Thyroid gland (tissue), 4 donors: ENCODE measurements at regions of chr6 and their contacts with region 1.

Region 1: GRCh38 chr6:35449287-35449881 is 2.8 kb upstream of the FANCE start:
- DNase-seq: peak; percentile 19 to 35
- H3K4me3 ChIP-seq: no peak overlapping the region
- H3K27ac ChIP-seq: no peak overlapping the region
- H3K4me1 ChIP-seq: peaks cover 11 to 18% of the 10 kb centered on the region in 2 donors
- H3K27me3 ChIP-seq: no peaks in the 10 kb centered on the region
- CTCF ChIP-seq: peak; percentile 45 to 88 (median 72)
- POLR2A ChIP-seq: no peak

Region 2: GRCh38 chr6:35297601-35298481 is 151.5 kb before region 1 on chr6 and contains the start of gene DEF6:
- intact Hi-C with region 1: loop called (anchors 5 kb)
- DNase-seq: peak; percentile 87 to 89
- H3K4me3 ChIP-seq: peak within 1 kb of the TSS in 1 of 3 donors; percentile 14
- H3K27ac ChIP-seq: peak within 1 kb of the TSS in 2 of 3 donors; percentile 16 to 30
- H3K4me1 ChIP-seq: peaks cover 4 to 16% of the 10 kb centered on the region in 2 donors
- H3K27me3 ChIP-seq: no peaks in the 10 kb centered on the region
- CTCF ChIP-seq: peak; percentile 22 to 95 (median 76)
- POLR2A ChIP-seq: no peak
- total RNA-seq, gene DEF6: 5.2 to 9.3 (median 6.0) TPM

Region 3: DNA sequence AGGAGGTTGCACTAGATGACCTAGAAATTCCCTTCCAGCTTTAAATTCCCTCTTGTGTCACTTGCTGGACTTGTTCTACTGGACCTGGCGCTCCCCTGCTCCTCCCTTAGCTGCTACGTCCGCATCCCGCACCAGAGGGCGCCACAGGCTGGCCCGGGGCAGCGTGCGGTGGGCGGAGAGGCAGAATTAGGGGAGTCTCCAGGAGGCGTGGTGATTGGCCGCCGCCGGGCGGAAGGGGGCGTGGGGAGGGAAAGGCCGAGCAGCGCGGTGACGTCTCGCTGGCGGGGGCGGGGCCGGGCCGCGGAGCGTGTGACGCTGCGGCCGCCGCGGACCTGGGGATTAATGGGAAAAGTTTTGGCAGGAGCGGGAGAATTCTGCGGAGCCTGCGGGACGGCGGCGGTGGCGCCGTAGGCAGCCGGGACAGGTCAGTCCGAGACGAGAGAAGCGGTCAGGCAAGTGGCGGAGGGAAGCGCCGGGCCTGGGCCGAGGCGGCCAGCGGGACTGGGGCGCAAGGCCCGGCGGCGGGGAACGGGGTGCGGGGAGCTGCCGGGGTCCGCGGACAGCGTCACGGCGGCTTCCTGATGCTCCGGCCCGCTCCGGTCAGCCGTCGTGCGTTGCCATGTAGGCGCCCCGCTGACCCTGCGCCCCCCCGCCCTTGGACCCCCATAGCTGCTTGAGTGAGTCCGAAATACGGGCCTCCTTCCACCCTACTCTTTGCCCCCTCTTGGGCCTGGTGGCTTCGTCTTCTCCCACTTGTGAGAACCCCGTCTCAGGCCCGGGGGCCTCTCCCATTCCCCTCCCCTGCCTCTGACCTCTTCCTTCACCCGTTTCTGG is 106.9 kb before region 1 on chr6 and contains the start of gene PPARD:
- intact Hi-C with region 1: loop called (anchors 2 kb)
- DNase-seq: peak; percentile 98 to 99
- H3K4me3 ChIP-seq: peak within 1 kb of the TSS; percentile 78 to 95 (median 87)
- H3K27ac ChIP-seq: peak within 1 kb of the TSS; percentile 92 to 96 (median 95)
- H3K4me1 ChIP-seq: peaks cover 35 to 41% of the 10 kb centered on the region in 2 donors
- H3K27me3 ChIP-seq: no peaks in the 10 kb centered on the region
- CTCF ChIP-seq: peak; percentile 94 to 100 (median 98)
- POLR2A ChIP-seq: peak; percentile 52 to 97
- total RNA-seq, gene PPARD: 17.3 to 40.3 (median 35.9) TPM

Region 4: GRCh38 chr6:35392111-35392702 is 57.2 kb before region 1 on chr6:
- intact Hi-C with region 1: no loop called
- DNase-seq: peak; percentile 99
- H3K4me3 ChIP-seq: no peak overlapping the region
- H3K27ac ChIP-seq: peak overlapping the region; percentile 82 to 91 (median 84)
- H3K4me1 ChIP-seq: peaks cover 42 to 56% of the 10 kb centered on the region in 2 donors
- H3K27me3 ChIP-seq: no peaks in the 10 kb centered on the region
- CTCF ChIP-seq: no peak
- POLR2A ChIP-seq: peak in 1 of 2 donors; percentile 40